Heart left ventricle (tissue), 16 donors: ENCODE measurements at regions of chrX and their contacts with region 1.

Region 1: DNA sequence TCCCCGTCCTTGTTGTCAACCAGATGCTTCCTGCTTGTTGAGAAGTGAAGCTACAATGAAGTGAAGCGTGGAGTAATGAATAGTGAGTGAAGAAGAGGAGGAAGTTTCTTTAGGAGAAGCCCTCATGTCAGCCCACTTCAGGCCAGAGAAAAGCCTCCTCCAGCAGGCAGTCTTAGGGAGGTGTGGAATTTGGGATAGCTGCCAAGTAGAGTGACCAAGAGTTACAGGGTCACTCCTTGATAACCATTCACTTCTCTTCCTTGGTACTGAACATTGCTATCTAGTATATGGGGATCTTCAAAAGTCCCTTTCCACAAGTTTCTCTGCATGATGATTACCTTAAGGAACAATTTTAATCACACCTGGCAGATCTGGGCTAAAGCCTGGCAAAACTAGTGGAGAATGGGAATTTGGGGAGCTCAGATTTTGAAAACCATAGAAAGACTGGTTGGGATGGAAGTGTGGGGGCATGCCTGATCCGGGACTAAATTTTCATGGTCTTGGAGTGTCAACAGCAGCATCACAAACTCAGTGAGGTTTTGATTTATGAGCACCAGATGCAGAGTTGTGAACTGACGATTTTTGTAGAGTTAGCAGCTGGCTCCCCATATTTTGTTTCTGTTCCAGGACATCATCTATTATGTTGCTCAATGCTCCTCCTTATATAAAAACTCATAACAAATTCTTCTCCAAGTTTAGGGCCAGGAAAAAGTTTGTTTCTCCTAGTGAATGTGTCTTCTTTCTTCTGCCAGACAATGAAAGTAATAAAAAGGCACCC is 53.1 kb downstream of the IGSF1 start:
- DNase-seq: no peak
- ATAC-seq: no peak
- H3K4me3 ChIP-seq: no peak overlapping the region
- H3K27ac ChIP-seq: no peak overlapping the region
- H3K4me1 ChIP-seq: no peaks in the 10 kb centered on the region
- H3K27me3 ChIP-seq: no peaks in the 10 kb centered on the region
- CTCF ChIP-seq: no peak
- POLR2A ChIP-seq: no peak

Region 2: GRCh38 chrX:131199091-131199490 is 36.9 kb before region 1 on chrX:
- intact Hi-C with region 1: no loop called
- DNase-seq: no peak
- ATAC-seq: no peak
- H3K4me3 ChIP-seq: no peak overlapping the region
- H3K27ac ChIP-seq: no peak overlapping the region
- H3K4me1 ChIP-seq: no peaks in the 10 kb centered on the region
- H3K27me3 ChIP-seq: peaks cover 0 to 16% (median 0%) of the 10 kb centered on the region in 9 donors
- CTCF ChIP-seq: no peak
- POLR2A ChIP-seq: no peak

Region 3: DNA sequence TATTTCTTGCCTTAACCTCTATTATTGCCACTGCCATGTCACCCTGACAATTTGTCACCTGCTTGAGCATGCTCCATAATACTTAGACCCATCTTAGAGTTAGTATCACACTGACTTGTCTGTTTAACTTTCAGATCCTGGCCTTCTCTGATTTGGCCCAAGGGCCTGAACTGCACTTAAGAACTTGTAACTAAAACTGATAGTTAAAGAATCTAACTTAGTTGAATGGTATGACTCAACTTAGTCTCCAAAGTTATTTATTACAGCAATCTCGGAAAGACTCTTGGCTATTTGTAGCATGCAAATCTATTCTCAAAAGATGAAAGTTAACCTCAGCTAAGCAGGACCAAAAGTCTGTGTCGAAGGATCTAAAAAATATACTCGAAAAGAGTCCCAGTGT is 19.1 kb before region 1 on chrX:
- intact Hi-C with region 1: loop called in 1 of 10 experiments (anchors 2 kb)
- DNase-seq: no peak
- ATAC-seq: no peak
- H3K4me3 ChIP-seq: no peak overlapping the region
- H3K27ac ChIP-seq: no peak overlapping the region
- H3K4me1 ChIP-seq: no peaks in the 10 kb centered on the region
- H3K27me3 ChIP-seq: peaks cover 0 to 26% (median 0%) of the 10 kb centered on the region in 9 donors
- CTCF ChIP-seq: no peak
- POLR2A ChIP-seq: no peak